ENCODE measurements at regions of chr4 and their contacts with region 1.

Region 1: DNA sequence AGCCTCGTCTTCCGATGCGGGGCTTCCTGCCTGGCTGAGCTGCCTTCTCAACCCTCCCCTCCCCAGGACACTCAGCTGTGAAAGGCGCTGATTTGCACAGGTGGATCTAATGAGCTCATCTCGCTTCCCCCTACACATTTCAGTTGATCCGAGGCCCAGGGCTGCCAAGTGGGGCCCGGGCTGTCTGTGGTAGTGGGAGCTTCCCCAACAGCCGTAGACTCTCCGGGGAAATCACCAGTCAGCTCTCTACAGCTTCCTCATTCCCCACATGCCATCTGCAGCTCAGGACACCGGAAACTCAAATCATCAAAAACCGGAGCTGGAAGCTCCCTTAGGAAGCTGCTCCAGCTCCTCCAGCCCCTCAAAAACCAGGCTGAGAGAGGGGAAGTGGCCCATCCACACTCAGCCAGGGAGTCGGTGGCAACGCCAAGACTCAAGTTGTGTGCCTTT is 56.2 kb downstream of the SMIM20 start:
- DNase-seq: no peak
- H3K4me3 Mint-ChIP-seq: no peak overlapping the region
- H3K27ac Mint-ChIP-seq: no peak overlapping the region
- H3K4me1 Mint-ChIP-seq: no peaks in the 10 kb centered on the region
- H3K27me3 Mint-ChIP-seq: no peaks in the 10 kb centered on the region

Region 2: GRCh38 chr4:25986807-25987206 is 16.6 kb after region 1 on chr4:
- CTCF ChIA-PET with region 1: interaction called, 18 read pairs
- POLR2A ChIA-PET with region 1: no interaction called
- DNase-seq: no peak
- H3K4me3 Mint-ChIP-seq: no peak overlapping the region
- H3K27ac Mint-ChIP-seq: no peak overlapping the region
- H3K4me1 Mint-ChIP-seq: peaks cover 7% of the 10 kb centered on the region
- H3K27me3 Mint-ChIP-seq: peaks cover 3% of the 10 kb centered on the region

Measured in activated CD4-positive, alpha-beta T cell treated with anti-CD3 and anti-CD28 coated beads, Interleukin-2, amount 10 ng/mL, durations not matched to agents 7 days and 5 days (primary cell).